ENCODE measurements at regions of chr19 and their contacts with region 1.

Region 1: GRCh38 chr19:35716801-35717666 is 769 bp upstream of the KMT2B start:
- DNase-seq: peak; percentile 87
- ATAC-seq: peak; percentile 71
- H3K4me3 Mint-ChIP-seq: peak overlapping the region; percentile 97
- H3K27ac Mint-ChIP-seq: peak overlapping the region; percentile 94
- H3K4me1 Mint-ChIP-seq: peaks cover 49% of the 10 kb centered on the region
- H3K27me3 Mint-ChIP-seq: no peaks in the 10 kb centered on the region

Region 2: DNA sequence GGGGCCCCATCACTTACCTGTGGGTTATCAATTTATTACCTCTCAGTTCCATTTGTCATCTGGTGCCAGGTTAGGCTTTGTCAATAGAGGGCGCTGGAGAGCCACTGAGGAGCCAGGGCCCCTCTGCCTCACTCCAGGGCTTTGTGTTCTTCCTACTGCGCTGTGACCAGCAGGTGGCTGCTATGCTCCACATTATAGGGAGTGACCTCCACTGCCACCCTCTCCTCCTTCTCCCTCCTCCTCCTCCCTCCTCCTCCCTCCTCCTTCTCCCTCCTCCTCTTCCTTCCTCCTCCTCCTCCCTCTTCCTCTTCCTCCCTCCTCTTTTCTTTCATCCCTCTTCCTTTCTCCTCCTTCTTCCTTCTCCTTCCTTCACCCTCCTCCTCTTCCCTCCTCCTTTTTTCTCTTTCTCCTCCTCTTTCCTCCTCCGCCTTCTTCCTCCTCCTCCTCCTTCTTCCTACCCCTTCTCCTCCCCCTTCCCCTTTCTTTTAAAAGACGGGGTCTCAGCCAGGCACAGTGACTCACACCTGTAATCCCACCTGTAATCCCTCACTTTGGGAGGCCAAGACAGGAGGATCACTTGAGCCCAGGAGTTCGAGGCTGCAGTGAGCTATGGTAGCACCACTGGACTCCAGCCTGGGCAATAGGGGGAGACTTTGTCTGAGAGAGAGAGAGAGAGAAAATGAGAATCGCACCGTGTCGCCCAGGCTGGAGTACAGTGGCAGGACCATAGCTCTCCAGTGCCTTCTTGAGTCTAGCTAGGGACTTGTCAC is 23.0 kb before region 1 on chr19:
- POLR2A ChIA-PET with region 1: interaction called, 61 read pairs
- DNase-seq: peak; percentile 86
- ATAC-seq: peak; percentile 100
- H3K4me3 Mint-ChIP-seq: no peak overlapping the region
- H3K27ac Mint-ChIP-seq: peak overlapping the region; percentile 12
- H3K4me1 Mint-ChIP-seq: peaks cover 16% of the 10 kb centered on the region
- H3K27me3 Mint-ChIP-seq: peaks cover 2% of the 10 kb centered on the region

Region 3: DNA sequence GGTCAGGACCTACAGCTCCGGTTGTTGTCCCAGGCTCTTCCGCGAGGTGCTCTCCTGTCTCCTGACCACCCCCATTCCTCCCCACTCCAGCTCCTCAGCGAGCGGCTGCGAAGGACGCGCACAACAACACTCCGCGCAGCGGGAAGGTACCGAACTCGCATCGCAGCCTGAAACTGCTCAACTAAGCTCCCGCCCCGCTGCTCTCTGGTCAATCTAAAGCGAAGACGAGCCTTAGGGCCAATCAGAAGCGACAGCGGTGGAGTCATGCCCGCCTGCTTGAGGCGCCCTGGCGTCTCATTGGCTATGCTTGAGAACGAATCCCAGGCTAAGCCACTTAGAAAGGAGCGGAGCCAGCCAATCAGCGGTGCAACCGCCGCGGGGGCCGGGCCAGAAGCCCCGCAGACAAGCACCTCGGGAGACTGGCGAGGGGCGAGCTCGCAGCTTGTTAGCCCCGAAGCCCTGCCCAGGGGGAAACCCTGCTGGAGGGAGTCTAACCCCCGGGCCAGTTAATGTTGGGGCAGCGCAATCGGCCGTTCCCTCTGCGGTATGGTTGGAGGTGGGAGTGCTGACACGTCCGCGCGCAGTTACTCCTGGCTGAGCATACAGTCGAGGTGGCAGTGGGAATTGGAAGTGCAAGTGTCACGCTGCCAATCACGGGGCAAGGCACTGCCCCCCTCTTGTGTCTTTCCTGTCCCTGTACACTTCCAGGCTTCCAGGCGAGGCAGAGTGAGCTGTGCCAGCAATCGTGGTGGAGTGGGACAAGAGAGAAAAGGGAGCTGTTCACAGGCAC is 14.6 kb before region 1 on chr19:
- POLR2A ChIA-PET with region 1: interaction called, 75 read pairs
- DNase-seq: peak; percentile 90
- ATAC-seq: peak; percentile 100
- H3K4me3 Mint-ChIP-seq: peak overlapping the region; percentile 98
- H3K27ac Mint-ChIP-seq: peak overlapping the region; percentile 96
- H3K4me1 Mint-ChIP-seq: peaks cover 7% of the 10 kb centered on the region
- H3K27me3 Mint-ChIP-seq: no peaks in the 10 kb centered on the region

Region 4: GRCh38 chr19:35740423-35741202 is 23.6 kb after region 1 on chr19:
- POLR2A ChIA-PET with region 1: interaction called, 32 read pairs
- DNase-seq: peak; percentile 95
- ATAC-seq: peak; percentile 68
- H3K4me3 Mint-ChIP-seq: peak overlapping the region; percentile 96
- H3K27ac Mint-ChIP-seq: peak overlapping the region; percentile 89
- H3K4me1 Mint-ChIP-seq: peaks cover 31% of the 10 kb centered on the region
- H3K27me3 Mint-ChIP-seq: no peaks in the 10 kb centered on the region

Region 5: DNA sequence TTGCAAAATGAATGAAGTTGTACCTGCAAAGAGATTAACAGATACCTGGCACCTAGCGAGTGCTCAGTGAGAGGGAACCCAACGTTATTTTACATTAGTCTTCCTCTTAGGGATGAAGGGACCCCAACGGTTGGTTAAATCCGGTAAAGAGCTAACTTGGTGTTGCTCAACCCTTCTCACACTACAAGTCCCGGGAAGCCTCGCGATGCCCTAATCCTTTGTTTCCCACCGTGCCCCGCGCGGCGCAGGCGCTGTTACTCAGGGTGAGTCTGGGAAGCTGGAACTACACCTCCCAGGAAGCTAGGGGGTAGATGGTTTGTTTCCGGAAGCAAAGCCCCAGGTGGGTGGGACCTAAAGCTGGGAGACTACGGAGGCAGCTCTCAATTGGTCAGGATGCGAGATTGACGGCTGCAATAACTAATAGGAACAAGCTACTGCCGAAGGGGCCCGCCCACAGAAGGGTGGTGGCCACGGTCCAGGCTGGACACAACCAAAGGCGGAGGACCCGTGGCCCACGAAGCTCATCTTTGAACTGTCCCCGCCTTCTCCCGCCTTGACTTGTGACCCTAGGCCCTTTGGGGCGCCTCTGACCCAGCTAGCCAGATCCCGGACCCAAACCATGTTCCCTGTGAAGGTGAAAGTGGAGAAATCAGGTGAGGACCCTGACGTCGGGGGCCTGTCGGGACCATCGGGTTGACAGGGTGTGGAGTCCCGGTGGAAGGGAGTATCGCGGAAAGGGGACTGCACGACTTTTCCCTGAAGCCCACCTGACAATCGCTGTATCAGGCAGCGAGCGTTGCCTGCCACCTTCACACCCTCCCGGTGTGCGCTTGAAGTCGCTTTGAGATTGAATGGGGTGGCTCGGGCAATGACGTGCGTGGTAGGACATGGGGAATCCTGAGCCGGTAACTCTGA is 31.3 kb after region 1 on chr19 and contains the start of gene LIN37:
- POLR2A ChIA-PET with region 1: interaction called, 20 read pairs
- DNase-seq: peak; percentile 94
- ATAC-seq: peak; percentile 76
- H3K4me3 Mint-ChIP-seq: peak within 1 kb of the TSS; percentile 98
- H3K27ac Mint-ChIP-seq: peak within 1 kb of the TSS; percentile 95
- H3K4me1 Mint-ChIP-seq: peaks cover 25% of the 10 kb centered on the region
- H3K27me3 Mint-ChIP-seq: no peaks in the 10 kb centered on the region
- total RNA-seq, gene LIN37: 18.3 to 22.4 TPM

Measured in activated naive CD8-positive, alpha-beta T cell treated with anti-CD3 and anti-CD28 coated beads, Interleukin-2, amount 10 ng/mL, durations not matched to agents 7 days and 5 days (primary cell).